ENCODE measurements at regions of chr18 and their contacts with region 1.

Region 1: DNA sequence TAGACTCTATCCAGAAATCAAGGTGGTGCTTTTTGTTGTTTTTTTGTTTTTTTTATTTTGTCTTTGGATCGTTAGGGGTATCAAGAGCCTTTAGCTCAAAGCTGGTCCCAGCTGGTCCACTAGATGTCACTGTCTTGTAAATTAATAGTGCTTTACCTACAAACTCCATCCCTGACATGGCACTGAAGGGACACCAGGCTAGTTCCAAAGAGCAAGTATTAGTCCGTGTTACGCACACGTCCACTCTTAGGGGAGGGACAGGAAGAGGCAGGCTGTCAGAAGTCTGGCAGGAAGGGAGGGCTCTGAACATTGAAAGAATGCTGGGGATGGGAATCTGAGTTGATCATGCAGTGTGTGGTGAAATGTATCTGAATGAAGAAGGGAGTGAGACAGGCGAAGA is 85.9 kb upstream of the CCBE1 start:
- DNase-seq: peak; percentile 51
- H3K4me3 ChIP-seq: no peak overlapping the region
- H3K27ac ChIP-seq: no peak overlapping the region
- H3K4me1 ChIP-seq: no peaks in the 10 kb centered on the region
- CTCF ChIP-seq: peak; percentile 74

Region 2: GRCh38 chr18:59484837-59485328 is 298.3 kb before region 1 on chr18:
- CTCF ChIA-PET with region 1: no interaction called
- POLR2A ChIA-PET with region 1: no interaction called
- intact Hi-C with region 1: no loop called
- DNase-seq: no peak
- H3K4me3 ChIP-seq: no peak overlapping the region
- H3K27ac ChIP-seq: no peak overlapping the region
- H3K4me1 ChIP-seq: no peaks in the 10 kb centered on the region
- CTCF ChIP-seq: no peak

Region 3: DNA sequence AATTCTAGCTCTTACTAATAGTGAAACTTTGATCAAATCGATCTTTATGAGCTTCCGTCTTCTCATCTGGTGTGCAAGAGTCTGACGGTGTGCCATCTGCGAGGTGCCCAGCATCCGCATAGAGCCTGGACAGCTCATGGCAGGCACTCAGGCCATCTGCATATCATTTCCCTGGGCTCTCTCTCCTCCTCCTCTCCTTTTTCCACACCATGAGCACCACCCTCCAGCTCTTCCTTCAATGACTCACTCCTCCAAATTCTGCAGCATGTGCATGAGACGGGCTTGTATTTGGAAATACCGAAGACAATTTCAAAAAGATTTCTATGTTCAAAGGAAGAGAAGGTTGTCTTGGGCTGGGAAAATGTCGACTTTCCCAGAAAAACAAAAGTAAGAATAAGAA is 247.0 kb before region 1 on chr18:
- CTCF ChIA-PET with region 1: no interaction called
- POLR2A ChIA-PET with region 1: no interaction called
- intact Hi-C with region 1: no loop called
- DNase-seq: no peak
- H3K4me3 ChIP-seq: no peak overlapping the region
- H3K27ac ChIP-seq: no peak overlapping the region
- H3K4me1 ChIP-seq: no peaks in the 10 kb centered on the region
- CTCF ChIP-seq: no peak

Region 4: DNA sequence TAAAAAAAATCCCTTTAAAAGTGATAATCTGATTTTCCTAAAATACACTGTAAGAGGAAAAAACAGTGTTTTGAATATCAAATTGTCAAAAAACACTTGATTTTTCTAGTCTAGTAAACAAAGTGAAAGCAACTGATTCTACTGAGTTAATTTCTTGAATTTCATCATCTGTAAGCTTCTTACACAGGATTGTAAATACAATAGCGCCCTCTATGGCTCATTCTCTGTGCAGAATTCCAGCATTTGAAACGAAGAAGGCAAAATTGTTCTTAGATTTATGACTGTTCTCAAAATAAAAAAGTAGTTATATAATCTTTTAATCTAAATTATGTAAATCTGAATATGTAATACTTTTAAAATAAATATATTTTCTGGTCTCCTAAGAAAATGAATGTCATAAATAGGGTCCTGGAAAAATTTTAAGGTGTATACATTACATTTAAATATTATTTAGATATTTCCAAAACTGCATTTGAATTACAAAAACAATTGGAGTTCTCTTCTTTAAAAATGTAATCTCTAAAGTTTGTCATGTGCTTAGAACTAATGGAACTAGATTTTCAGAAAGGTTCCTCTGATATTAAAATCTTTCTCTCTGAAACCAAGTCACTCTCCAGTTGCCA is 766.3 kb after region 1 on chr18:
- CTCF ChIA-PET with region 1: no interaction called
- POLR2A ChIA-PET with region 1: no interaction called
- intact Hi-C with region 1: loop called (anchors 5 kb)
- DNase-seq: peak; percentile 70
- H3K4me3 ChIP-seq: no peak overlapping the region
- H3K27ac ChIP-seq: no peak overlapping the region
- H3K4me1 ChIP-seq: no peaks in the 10 kb centered on the region
- CTCF ChIP-seq: peak; percentile 81